BJ (cell line): ENCODE measurements at regions of chr3 and their contacts with region 1.

Region 1: GRCh38 chr3:136752422-136753325 is 496 bp upstream of the STAG1 start:
- DNase-seq: peak; percentile 90
- H3K4me3 ChIP-seq: peak overlapping the region; percentile 81
- H3K27me3 ChIP-seq: no peaks in the 10 kb centered on the region
- CTCF ChIP-seq: peak; percentile 41

Region 2: DNA sequence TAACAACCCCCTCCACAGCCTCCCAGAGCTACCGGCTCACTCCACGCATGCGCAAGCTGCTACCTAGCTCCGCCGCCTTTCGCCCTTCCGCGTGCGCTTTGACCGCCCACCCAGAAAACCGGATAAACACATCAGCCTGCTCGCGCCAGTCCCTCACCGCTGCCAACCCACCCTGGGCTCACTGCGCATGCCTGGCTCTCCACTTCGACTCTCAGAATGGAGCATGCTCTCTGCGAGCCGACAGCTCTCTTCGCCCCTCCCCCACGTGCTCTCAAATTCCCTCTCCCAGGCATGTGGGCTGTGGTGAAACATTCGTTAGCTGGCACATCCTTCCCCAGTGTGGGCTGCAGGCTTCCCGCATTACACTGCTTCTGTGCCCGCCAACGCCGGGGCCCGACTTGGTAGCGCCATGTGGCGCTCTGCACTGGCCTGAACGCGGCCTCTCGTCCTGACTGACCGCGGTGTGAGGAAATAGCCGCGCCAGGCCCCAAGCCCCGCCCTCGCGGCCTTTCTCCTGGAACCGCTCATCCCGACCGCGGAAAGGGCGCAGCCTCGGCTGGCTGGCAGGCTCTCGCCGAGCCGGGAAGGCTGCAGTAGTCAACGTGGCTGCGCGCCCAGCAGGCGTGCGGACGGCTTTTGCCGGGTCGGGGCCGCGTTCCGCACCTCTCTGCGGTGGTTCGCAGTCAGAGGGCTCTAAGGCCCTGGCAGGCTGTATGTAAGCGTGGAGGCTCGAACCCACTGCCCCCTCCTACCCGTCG is 556.1 kb before region 1 on chr3:
- CTCF ChIA-PET with region 1: interaction called, 11 read pairs
- POLR2A ChIA-PET with region 1: interaction called, 6 read pairs
- DNase-seq: peak; percentile 99
- H3K4me3 ChIP-seq: peak overlapping the region; percentile 84
- H3K27me3 ChIP-seq: no peaks in the 10 kb centered on the region
- CTCF ChIP-seq: no peak

Region 3: GRCh38 chr3:136336329-136337100 is 416.2 kb before region 1 on chr3:
- CTCF ChIA-PET with region 1: interaction called, 10 read pairs
- POLR2A ChIA-PET with region 1: no interaction called
- DNase-seq: peak; percentile 41
- H3K4me3 ChIP-seq: no peak overlapping the region
- H3K27me3 ChIP-seq: no peaks in the 10 kb centered on the region
- CTCF ChIP-seq: no peak

Region 4: DNA sequence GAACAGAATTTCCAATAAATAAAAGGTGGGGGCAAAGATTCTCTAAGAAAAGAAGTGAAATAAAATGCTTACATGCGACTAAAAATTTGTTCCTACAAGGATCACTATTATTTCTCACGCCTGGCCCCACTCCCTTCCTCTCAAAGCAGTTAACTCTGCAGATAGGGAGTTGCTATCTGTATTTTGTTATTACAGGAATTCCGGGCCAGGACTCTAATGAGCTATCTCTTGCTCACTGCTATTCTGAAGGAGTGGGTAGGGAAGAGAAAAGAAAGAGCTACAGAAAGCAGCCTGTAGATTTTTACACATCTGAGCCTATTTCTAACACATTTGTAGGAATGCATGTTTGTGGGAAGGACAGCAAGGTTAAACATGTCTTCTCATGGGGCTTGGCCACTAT is 362.1 kb before region 1 on chr3:
- CTCF ChIA-PET with region 1: interaction called, 41 read pairs
- POLR2A ChIA-PET with region 1: interaction called, 3 read pairs
- DNase-seq: no peak
- H3K4me3 ChIP-seq: no peak overlapping the region
- H3K27me3 ChIP-seq: no peaks in the 10 kb centered on the region
- CTCF ChIP-seq: no peak

Region 5: DNA sequence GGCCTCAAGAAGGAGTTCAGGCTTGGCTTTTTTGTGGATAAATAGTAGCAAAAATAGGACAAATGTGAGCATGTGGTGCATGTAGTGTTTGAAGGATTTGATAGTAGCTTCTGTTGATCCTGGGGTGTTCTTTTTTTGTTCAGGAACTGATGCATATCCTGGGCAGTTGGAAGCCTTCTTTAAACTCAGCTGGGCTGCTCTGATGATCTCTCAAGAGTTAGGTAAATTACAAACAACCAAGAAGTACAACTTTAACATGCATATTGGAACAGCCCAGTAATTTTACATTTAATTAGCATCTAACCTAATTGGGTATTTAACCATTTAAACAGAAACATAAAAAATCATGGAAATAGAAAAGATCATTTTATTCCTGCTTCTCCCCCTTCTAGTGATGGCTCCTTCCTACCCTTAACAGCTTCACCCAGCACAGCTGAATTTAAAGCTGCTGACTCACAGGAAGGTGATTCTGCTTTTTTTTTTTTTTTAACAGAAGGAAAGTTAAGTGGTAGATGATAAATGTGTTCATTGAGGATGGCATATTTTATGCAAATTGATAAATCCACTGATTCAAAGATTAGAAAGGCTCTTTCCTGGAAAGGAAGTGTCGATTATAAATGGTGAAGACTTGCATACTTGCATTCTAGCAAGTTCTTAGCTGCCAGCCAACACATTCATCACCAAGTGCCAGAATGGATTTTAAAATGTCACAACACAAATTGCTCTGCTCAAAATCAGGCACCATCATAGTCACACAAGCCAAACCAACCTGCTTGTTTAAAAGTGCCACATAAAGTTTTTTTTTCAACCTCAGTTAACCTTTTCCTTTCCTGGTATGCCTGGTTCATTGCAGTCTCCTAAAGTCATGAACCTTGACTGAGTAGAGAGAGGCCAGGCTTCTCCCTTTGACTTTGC is 86.2 kb after region 1 on chr3:
- CTCF ChIA-PET with region 1: no interaction called
- POLR2A ChIA-PET with region 1: no interaction called
- DNase-seq: no peak
- H3K4me3 ChIP-seq: no peak overlapping the region
- H3K27me3 ChIP-seq: no peaks in the 10 kb centered on the region
- CTCF ChIP-seq: no peak

Region 6: DNA sequence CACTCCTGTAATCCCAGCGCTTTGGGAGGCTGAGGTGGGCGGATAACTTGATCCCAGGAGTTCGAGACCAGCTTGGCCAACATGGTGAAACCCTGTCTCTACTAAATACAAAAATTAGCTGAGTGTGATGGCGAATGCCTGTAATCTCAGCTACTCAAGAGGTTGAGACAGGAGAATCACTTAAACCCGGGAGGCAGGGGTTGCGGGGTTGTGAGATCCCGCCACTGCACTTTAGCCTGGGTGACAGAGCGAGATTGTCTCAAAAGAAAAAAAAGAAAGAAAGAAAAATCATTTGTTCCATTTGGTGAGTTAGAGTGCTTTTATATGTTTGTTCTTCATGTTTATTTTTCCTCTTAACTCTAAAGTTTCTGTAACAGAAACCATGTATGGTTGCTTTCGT is 116.6 kb after region 1 on chr3:
- CTCF ChIA-PET with region 1: no interaction called
- POLR2A ChIA-PET with region 1: interaction called, 10 read pairs
- DNase-seq: no peak
- H3K4me3 ChIP-seq: no peak overlapping the region
- H3K27me3 ChIP-seq: no peaks in the 10 kb centered on the region
- CTCF ChIP-seq: no peak

Region 7: DNA sequence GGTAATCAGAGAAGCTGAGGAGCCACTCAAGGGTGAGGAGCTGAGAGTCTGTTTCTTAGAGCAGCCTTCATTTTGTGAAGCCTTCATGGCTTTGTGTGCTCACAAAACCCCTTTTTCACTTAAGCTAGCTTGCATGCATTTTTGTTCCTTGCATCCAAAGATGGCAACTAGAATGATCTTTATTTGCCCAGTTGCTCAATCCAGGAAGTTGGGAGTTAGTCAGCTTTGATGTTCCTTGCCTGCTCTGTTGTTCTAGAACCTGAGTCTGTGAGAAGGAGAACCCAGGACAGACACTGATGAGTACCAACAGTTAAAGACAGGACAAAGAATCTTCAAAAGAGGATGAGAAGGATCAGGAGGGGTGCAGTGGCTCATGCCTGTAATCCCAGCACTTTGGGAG is 286.9 kb after region 1 on chr3:
- CTCF ChIA-PET with region 1: no interaction called
- POLR2A ChIA-PET with region 1: no interaction called
- DNase-seq: no peak
- H3K4me3 ChIP-seq: no peak overlapping the region
- H3K27me3 ChIP-seq: no peaks in the 10 kb centered on the region; the same call in 1 of the 2 replicates
- CTCF ChIP-seq: no peak